PC-9 (cell line): ENCODE measurements at regions of chr6 and their contacts with region 1.

Region 1: DNA sequence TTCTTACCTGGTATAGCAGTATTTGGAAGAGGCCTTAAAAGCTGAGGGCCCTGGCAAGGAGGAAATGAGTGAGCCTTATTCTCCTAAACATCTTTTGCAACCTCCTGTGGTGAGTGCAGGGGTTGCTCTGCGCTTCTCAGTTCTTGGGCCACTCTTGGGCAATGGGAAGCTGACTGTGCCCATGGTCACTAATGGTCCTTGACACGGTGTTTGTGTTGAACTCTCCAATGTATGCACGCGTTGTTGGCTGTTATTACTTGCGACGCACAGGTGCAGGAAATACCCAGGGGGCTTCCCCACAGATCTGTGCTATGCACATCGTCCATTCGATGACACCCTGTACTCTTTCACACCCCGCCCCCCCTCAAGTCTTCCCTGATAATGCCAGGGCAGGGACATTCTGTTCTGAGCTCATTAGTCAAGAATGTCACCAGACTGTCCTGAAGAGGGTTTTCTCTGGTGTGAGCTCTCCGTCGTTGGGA is 79.7 kb downstream of the EDN1 start:
- DNase-seq: peak; percentile 27 to 75
- H3K4me3 ChIP-seq: no peak overlapping the region
- H3K27ac ChIP-seq: no peak overlapping the region
- H3K4me1 ChIP-seq: peaks cover 16% of the 10 kb centered on the region
- H3K27me3 ChIP-seq: no peaks in the 10 kb centered on the region
- CTCF ChIP-seq: 0 out of 2 replicates have a peak, but pooled peaks have one; percentile 21

Region 2: DNA sequence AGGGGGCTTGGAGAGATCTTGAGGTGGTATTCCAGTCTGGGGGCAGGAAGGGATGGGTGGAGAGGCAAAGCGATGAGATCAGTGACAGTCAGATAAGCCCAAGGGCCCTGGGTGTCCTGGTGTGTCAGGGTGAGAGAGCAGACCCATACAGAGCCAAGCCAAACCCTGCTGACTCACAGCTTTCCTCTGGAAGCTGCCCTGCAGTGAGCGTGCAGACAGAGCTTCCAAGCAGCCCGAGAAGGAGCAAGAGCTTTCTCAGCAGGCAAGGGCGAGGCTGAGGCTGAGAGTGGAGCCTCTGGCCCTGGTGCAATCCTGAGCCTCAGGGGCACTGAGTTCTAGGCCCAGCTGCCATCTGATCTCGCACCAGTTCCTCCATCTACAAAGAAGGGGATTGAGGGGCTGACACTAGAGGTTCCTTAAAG is 448.8 kb before region 1 on chr6:
- CTCF ChIA-PET with region 1: interaction called, 10 read pairs
- POLR2A ChIA-PET with region 1: no interaction called
- intact Hi-C with region 1: no loop called
- DNase-seq: peak; percentile 70 to 85
- H3K4me3 ChIP-seq: no peak overlapping the region
- H3K27ac ChIP-seq: peak overlapping the region; percentile 55
- H3K4me1 ChIP-seq: peaks cover 18% of the 10 kb centered on the region
- H3K27me3 ChIP-seq: no peaks in the 10 kb centered on the region
- CTCF ChIP-seq: no peak

Region 3: GRCh38 chr6:12232339-12232738 is 137.5 kb before region 1 on chr6:
- CTCF ChIA-PET with region 1: no interaction called
- POLR2A ChIA-PET with region 1: no interaction called
- intact Hi-C with region 1: no loop called
- DNase-seq: no peak
- H3K4me3 ChIP-seq: no peak overlapping the region
- H3K27ac ChIP-seq: no peak overlapping the region
- H3K4me1 ChIP-seq: peaks cover 5% of the 10 kb centered on the region
- H3K27me3 ChIP-seq: no peaks in the 10 kb centered on the region
- CTCF ChIP-seq: no peak

Region 4: DNA sequence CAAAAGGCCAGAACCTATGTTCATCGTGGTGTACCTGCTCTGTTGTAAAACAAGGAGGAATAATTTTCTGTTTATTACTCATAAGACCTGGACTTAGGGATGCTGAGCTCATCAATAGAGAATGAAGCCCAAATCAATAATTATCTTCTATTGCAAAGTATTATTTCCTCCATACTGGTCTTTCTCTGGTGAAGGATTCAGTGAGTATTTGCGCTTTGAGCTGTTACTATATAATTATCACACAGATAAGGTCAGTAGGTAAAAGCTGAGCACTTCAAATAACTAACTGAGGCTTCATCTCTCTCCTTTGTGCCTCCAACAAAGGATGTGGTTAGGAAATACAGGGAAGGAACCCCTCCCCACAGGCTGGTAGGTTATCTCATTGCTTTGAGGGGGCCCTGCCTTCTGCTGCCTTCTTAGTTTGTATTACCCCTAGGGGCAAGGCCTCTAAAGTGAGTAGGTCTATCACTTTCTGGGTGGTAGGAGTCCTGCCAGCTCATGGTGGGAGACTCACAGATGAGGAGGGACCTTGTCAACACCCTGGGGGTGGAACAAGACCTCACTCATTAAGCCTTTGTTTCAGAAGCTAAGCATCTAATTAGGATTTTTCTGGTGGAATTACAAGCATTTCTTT is 45.2 kb before region 1 on chr6:
- CTCF ChIA-PET with region 1: interaction called, 8 read pairs
- POLR2A ChIA-PET with region 1: interaction called, 17 read pairs
- intact Hi-C with region 1: no loop called
- DNase-seq: peak; percentile 31 to 56
- H3K4me3 ChIP-seq: peak overlapping the region; percentile 6; the same call in 1 of the 2 replicates
- H3K27ac ChIP-seq: peak overlapping the region; percentile 95
- H3K4me1 ChIP-seq: peaks cover 41% of the 10 kb centered on the region
- H3K27me3 ChIP-seq: no peaks in the 10 kb centered on the region
- CTCF ChIP-seq: no peak

Region 5: GRCh38 chr6:12420626-12421025 is 50.8 kb after region 1 on chr6:
- CTCF ChIA-PET with region 1: no interaction called
- POLR2A ChIA-PET with region 1: no interaction called
- intact Hi-C with region 1: no loop called
- DNase-seq: no peak
- H3K4me3 ChIP-seq: no peak overlapping the region
- H3K27ac ChIP-seq: no peak overlapping the region
- H3K4me1 ChIP-seq: no peaks in the 10 kb centered on the region
- H3K27me3 ChIP-seq: no peaks in the 10 kb centered on the region
- CTCF ChIP-seq: no peak

Region 6: DNA sequence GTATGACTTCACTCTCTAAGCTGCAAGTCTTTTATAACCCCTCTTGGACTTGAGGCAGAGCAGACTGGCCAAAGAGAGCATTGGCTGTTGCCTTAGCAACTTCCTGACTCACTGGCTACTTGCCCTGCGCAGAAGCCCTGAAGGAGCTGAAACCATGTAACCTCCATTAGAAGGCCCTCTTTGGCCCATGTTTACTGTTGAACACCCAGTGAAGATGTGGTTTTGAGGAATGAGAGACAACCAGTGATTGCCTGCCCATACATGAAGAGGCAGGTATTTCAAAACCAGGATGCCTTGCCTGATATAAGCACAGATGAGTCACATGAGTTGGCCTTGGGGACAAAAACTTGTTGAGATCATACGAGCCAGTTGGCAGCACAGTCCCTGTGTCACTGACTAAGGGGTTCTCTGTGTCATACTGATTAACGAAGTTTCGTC is 102.8 kb after region 1 on chr6:
- CTCF ChIA-PET with region 1: interaction called, 12 read pairs
- POLR2A ChIA-PET with region 1: no interaction called
- intact Hi-C with region 1: no loop called
- DNase-seq: peak; percentile 26 to 74
- H3K4me3 ChIP-seq: no peak overlapping the region
- H3K27ac ChIP-seq: no peak overlapping the region
- H3K4me1 ChIP-seq: no peaks in the 10 kb centered on the region
- H3K27me3 ChIP-seq: no peaks in the 10 kb centered on the region
- CTCF ChIP-seq: no peak

Region 7: DNA sequence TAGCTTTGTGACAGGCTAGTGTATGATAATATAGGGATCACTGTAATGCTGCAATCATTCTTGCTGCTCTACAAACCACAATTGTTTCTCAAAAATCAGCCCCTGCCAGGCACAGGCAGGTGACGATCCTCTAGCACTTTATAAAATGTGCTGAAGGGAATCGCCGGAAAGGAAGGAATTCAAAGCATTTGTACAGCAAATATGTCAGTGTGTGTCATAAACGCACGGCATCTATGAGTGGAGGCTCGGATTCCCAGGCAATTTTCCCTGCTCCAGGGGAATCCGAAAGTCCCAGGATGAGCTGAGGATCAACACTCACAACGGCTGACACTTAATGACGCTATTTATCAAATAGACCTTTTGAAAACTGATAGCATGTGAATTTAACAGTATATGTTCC is 348.2 kb after region 1 on chr6:
- CTCF ChIA-PET with region 1: no interaction called
- POLR2A ChIA-PET with region 1: no interaction called
- intact Hi-C with region 1: no loop called
- DNase-seq: no peak
- H3K4me3 ChIP-seq: no peak overlapping the region
- H3K27ac ChIP-seq: no peak overlapping the region
- H3K4me1 ChIP-seq: no peaks in the 10 kb centered on the region
- H3K27me3 ChIP-seq: peaks cover 68% of the 10 kb centered on the region
- CTCF ChIP-seq: no peak